ENCODE measurements at regions of chr3 and their contacts with region 1.

Region 1: DNA sequence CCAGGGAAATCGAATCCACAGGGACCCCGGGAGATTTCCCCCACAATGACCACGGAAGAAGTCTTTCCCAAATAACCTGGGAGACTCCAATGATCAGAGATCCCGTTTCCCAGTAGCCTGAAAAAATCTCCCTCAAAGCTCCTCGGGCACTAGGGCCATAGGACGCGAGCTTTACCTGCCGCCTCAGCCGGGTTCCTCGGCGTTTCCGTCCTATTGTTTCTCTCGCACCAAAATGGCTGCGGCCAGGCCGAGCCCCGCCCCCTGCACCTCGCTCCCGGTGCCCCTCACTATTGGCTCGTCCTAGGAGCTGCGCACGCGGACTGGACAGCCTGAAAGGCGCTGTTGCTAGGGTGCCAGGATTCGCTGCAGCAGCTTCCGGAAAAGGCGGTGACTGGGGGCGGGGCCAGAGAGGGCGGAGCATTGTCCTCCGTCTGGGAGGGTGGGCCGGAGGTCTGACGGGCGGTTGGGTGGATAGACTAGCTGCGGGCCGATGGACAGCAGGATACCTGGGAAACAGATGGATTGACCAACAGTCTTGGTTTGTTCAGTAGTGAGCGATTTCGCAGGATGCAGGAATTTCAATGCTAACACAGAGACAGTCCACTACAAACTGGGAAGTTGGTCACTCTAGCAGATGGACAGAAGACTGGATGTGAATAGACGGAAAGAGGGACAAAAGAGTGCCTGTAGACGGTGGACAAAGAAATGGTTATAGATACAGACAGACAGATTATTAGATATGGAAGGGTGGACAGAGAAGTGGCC is at the start of gene IP6K2:
- DNase-seq: peak; percentile 99

Region 2: DNA sequence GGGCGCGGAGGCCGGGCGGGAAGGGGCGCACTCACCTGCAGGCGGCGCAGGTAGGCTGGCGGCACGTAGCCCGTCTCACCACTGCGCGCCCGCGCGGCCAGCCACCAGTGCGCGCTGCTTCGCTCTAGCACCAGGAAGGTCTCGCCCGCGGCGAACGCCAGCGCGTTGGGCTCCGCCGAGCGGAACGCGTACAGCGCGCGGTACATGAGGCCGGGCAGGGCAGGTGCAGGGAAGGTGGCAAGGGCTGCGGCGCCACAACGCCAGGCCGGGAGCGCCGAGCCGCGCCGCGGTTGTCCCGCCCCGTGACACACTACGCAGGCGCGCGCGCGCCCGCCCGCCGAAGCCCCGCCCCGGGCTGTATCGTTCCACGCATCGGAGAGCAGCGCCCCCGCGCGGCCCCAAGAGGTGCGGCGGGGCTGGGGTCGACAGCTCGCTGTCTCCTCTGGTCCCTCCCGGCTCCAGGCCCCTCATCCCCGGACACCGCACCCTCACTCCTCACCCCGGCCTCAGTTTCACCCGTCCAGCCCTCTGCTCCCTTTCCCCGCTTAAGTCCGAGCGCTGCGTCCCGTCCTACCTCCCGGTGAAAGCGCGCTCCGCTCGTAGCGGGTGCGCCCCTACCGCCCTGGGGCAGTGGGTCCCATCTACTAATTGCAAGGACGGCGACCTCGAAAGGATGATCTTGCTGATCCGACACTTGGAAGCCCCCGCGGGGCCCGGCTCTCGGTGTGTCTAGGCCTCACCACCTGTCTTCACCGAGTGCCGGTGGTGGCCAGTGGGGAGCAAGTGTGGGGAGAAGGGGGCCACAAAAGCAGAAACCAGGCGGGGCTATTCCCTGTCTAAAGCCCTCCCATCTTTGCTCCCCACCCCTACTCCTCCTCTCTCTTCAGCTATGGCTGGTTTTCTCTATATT is 31.3 kb before region 1 on chr3 and contains the start of gene NCKIPSD:
- CTCF ChIA-PET with region 1: interaction called, 3 read pairs
- POLR2A ChIA-PET with region 1: interaction called, 10 read pairs
- DNase-seq: peak; percentile 97

Region 3: GRCh38 chr3:48727511-48727910 is 10.3 kb after region 1 on chr3:
- CTCF ChIA-PET with region 1: no interaction called
- POLR2A ChIA-PET with region 1: interaction called, 12 read pairs
- DNase-seq: no peak

Region 4: GRCh38 chr3:48748754-48749153 is 31.6 kb after region 1 on chr3:
- CTCF ChIA-PET with region 1: no interaction called
- POLR2A ChIA-PET with region 1: no interaction called
- DNase-seq: no peak